K562 (cell line): ENCODE measurements at regions of chr7 and their contacts with region 1.

Region 1: DNA sequence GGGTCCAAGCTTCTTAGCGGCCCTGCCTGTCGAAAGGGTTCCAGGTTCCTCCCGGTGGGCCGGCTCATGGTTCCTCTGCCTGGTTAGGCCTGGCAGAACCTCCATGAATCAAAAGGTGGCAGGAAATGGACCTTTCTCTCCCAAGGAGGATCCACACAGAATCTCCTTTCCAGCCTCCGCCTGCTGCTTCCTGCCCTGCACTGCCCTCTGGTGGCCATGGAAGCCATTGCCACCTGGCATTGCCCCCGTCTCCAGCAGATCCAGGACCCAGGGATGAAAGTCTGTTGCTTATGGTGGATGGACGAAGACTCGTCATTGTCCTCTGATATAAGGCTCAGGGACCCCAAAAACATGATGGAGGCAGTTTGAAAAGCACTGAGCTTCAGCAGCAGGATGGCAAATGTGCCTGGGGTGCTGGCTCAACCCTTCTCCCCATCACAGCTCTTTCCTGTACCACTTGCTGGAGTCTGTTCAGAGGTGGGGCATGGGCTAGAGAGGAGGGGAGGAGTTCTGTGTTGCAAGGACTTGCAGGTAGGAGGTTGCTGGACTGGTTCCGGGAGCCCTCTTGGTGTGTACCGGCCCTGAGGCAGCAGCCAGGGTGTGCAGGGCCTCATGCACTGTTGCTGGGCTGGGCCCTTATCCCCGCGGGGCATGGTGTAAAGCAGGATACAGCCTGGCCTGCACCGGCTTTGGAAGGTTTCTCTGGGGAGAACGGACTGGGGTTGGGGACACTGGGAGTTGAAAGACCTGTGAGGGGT is 11.3 kb upstream of the INMT start:
- DNase-seq: peak; percentile 79 to 87 (median 86)
- ATAC-seq: peak; percentile 80
- H3K4me3 ChIP-seq: no peak overlapping the region
- H3K27ac ChIP-seq: no peak overlapping the region
- H3K4me1 ChIP-seq: peaks cover 4 to 16% of the 10 kb centered on the region in 2 experiments; a peak in 2 of 5 replicates
- H3K27me3 ChIP-seq: peaks cover 0 to 25% of the 10 kb centered on the region in 2 experiments; a peak in 4 of 5 replicates
- CTCF ChIP-seq: peak; percentile 91 to 99 (median 96)
- EP300 ChIP-seq: no peak
- POLR2A ChIP-seq: no peak
- RAD21 ChIP-seq: peak; percentile 83 to 96

Region 2: GRCh38 chr7:30276203-30276900 is 464.3 kb before region 1 on chr7:
- CTCF ChIA-PET with region 1: interaction called, 12 read pairs
- POLR2A ChIA-PET with region 1: no interaction called
- in situ Hi-C with region 1: no loop called
- intact Hi-C with region 1: loop called (anchors 10 kb)
- DNase-seq: peak in 2 of 4 experiments; percentile 57 to 75
- ATAC-seq: peak; percentile 91
- H3K4me3 ChIP-seq: no peak overlapping the region
- H3K27ac ChIP-seq: no peak overlapping the region
- H3K4me1 ChIP-seq: peaks cover 0 to 5% of the 10 kb centered on the region in 2 experiments; a peak in 3 of 5 replicates
- H3K27me3 ChIP-seq: no peaks in the 10 kb centered on the region
- CTCF ChIP-seq: peak; percentile 82 to 86 (median 82)
- EP300 ChIP-seq: no peak
- POLR2A ChIP-seq: no peak
- RAD21 ChIP-seq: peak; percentile 85 to 94

Region 3: GRCh38 chr7:30548762-30549344 is 191.8 kb before region 1 on chr7:
- CTCF ChIA-PET with region 1: interaction called, 14 read pairs
- POLR2A ChIA-PET with region 1: no interaction called
- in situ Hi-C with region 1: no loop called
- intact Hi-C with region 1: loop called (anchors 1 kb)
- DNase-seq: peak; percentile 69 to 75 (median 72)
- ATAC-seq: peak; percentile 97
- H3K4me3 ChIP-seq: no peak overlapping the region
- H3K27ac ChIP-seq: no peak overlapping the region
- H3K4me1 ChIP-seq: peaks cover 0 to 10% of the 10 kb centered on the region in 2 experiments; a peak in 3 of 5 replicates
- H3K27me3 ChIP-seq: no peaks in the 10 kb centered on the region
- CTCF ChIP-seq: peak; percentile 72 to 79 (median 77)
- EP300 ChIP-seq: no peak
- POLR2A ChIP-seq: no peak
- RAD21 ChIP-seq: peak; percentile 57 to 80

Region 4: DNA sequence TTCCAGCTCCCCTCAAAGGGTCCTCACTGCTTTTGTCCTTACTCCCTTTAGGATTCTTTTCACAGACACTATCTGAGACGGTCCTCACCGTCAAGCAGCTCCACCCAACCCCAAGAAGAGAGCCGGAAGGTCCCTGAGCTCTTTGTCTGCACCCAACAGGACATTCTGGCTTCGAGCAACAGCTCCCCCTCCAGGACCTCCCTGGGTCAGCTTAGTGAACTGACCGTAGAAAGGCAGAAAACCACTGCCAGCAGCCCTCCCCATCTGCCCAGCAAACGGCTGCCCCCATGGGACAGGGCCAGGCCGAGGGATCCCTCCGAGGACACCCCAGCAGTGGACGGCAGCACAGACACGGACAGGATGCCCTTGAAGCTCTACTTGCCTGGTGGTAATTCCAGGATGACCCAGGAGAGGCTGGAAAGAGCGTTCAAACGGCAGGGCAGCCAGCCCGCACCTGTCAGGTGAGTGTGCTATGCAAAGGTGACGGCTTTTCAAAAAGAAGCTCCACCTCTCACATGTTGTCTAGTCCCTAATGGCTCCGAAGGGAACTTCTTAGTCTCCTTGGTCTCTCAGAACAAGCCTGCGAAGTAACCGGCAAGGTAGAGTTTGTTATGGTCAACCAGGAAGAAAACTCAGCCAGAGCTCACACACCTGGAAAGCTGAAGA is 50.6 kb after region 1 on chr7:
- CTCF ChIA-PET with region 1: interaction called, 4 read pairs
- POLR2A ChIA-PET with region 1: interaction called, 5 read pairs
- in situ Hi-C with region 1: no loop called
- intact Hi-C with region 1: loop called (anchors 1 kb)
- DNase-seq: peak in 2 of 4 experiments; percentile 46 to 49
- ATAC-seq: peak; percentile 90
- H3K4me3 ChIP-seq: no peak overlapping the region
- H3K27ac ChIP-seq: no peak overlapping the region
- H3K4me1 ChIP-seq: 0 out of 5 replicates have a peak, but pooled peaks cover 0 to 3% of the 10 kb centered on the region in 2 experiments
- H3K27me3 ChIP-seq: no peaks in the 10 kb centered on the region
- CTCF ChIP-seq: peak; percentile 32 to 54 (median 52); a peak in 4 of 6 replicates
- EP300 ChIP-seq: no peak
- POLR2A ChIP-seq: no peak
- RAD21 ChIP-seq: peak; percentile 45 to 58

Region 5: GRCh38 chr7:30974605-30975255 is 234.1 kb after region 1 on chr7:
- CTCF ChIA-PET with region 1: interaction called, 10 read pairs
- POLR2A ChIA-PET with region 1: no interaction called
- in situ Hi-C with region 1: loop called (anchors 5 kb)
- intact Hi-C with region 1: loop called (anchors 1 kb)
- DNase-seq: peak; percentile 82 to 86 (median 84)
- ATAC-seq: peak; percentile 97
- H3K4me3 ChIP-seq: no peak overlapping the region
- H3K27ac ChIP-seq: no peak overlapping the region
- H3K4me1 ChIP-seq: peaks cover 3 to 19% of the 10 kb centered on the region in 2 experiments; a peak in 4 of 5 replicates
- H3K27me3 ChIP-seq: peaks cover 13 to 28% of the 10 kb centered on the region in 2 experiments; a peak in 4 of 5 replicates
- CTCF ChIP-seq: peak; percentile 90 to 96 (median 95)
- EP300 ChIP-seq: no peak
- POLR2A ChIP-seq: no peak
- RAD21 ChIP-seq: peak; percentile 88 to 96